ENCODE measurements at regions of chrX and their contacts with region 1.

Region 1: DNA sequence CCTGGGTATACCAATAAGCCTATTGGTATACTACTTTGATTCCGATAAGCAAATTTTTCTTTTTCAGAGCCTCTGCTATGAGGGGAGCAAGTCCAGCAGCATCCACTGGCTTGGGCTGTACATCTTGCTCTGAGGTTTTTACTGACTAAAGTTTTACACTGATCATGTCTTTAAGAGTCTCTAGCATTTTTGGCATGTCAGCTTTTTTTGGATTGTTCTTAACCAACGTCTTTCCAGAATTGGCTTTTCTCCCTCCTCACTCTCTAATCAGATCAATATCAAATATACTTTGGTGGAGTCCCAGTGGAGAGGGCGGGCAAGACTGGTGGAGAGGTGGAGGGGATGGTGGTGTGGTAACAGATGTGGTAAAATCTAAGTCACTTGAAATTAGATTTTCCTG is 196.8 kb downstream of the HEPH start:
- DNase-seq: no peak

Region 2: DNA sequence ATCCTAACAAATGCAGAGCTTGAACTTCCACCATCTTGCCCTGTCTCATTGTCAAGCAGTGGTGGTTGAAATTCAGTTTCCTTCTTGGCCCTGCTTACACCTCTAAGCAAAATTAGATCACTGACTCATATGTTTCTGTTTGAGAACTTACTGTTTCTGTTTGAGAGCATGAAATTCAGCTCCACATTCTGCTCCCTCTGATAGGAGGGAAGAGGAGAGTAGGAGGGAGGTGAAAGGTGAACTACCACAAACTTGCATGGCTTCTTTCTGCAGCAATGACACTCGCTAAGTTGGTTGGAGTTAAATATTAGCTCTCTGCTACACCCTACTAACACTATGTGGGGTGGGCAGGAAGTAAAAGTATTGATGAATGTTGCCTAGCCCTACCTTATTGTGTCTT is 395.8 kb after region 1 on chrX:
- intact Hi-C with region 1: loop called in 1 of 2 experiments (anchors 10 kb)
- DNase-seq: no peak

Region 3: DNA sequence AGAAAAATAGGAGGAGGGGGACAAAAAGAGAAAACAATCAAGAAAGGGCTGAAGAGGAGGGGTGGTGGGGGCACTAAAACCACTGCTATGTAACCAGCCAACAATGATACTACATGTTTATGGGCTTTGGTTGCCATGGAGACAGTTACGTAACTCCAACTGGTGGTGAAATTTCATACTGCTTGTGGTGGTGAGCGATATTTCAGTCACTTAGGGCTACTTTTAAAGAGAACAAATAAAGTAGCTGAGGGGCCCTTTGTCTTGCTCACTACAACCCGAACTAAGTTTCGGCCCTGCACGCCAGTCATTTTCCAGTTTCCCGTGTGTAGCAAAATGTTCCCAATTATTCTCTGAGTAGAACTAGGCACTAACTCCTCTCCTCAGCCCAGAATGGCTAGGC is 553.2 kb after region 1 on chrX:
- intact Hi-C with region 1: no loop called
- DNase-seq: no peak

Measured in posterior vena cava (tissue), 2 donors.